Psoas muscle (tissue), 8 donors: ENCODE measurements at regions of chr10 and their contacts with region 1.

Region 1: DNA sequence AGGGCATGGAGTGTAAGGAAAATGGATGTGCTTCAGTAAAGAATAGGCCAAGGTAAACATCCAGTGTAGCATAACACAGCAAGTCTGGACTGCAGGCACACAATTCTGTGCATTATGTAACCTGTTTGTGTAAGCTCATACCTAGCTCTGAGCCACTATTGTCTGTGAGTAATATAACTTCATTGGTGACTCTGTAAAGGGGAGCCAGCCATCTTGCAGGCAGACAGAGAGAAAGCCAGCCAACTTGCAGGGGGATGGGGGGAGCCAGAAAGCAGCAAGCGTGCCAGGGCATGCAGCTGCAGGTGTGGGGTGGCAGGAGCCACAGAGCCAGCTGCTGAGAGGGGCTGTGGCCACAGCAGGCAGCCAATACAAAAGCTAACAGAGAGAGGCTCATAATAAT is 449.2 kb downstream of the IPMK start:
- DNase-seq: no peak
- ATAC-seq: no peak
- H3K4me3 ChIP-seq: no peak overlapping the region
- H3K27ac ChIP-seq: no peak overlapping the region
- H3K4me1 ChIP-seq: no peaks in the 10 kb centered on the region
- H3K27me3 ChIP-seq: no peaks in the 10 kb centered on the region
- CTCF ChIP-seq: no peak

Region 2: DNA sequence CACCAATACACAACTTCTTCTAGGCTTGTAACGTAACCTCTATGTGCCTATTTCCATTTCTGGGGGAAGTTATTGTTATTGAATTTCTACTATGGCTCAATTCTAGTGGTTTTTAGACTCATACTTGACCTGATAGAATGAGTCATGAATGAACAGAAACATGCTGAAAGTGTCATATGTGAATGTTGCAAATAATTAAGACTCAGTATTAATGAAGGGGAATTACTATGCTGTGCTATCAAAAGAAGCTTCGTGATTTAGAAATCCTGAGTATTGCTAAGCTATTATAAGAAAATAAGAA is 1322.4 kb before region 1 on chr10:
- intact Hi-C with region 1: loop called in 1 of 2 experiments (anchors 5 kb)
- DNase-seq: no peak
- ATAC-seq: no peak
- H3K4me3 ChIP-seq: no peak overlapping the region
- H3K27ac ChIP-seq: no peak overlapping the region
- H3K4me1 ChIP-seq: no peaks in the 10 kb centered on the region
- H3K27me3 ChIP-seq: no peaks in the 10 kb centered on the region
- CTCF ChIP-seq: no peak

Region 3: DNA sequence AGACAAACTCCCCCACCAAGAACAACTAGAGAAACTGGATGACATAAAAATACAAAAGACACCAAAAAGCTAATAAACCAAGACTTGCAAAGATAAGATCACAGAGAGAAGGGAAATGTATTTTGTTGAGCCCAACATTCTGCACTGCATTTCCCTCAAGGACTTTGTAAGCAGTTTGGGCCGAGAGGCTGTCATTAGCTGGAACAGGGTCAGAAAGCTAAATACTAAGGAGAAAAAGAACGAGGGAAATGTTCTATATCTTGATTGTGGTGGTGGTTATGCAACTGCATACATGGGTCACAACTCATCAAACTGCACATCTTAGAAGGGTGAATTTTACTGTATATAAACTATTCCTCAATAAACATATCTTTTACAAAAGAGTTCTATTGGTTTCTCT is 134.2 kb after region 1 on chr10:
- intact Hi-C with region 1: no loop called
- DNase-seq: no peak
- ATAC-seq: no peak
- H3K4me3 ChIP-seq: no peak overlapping the region
- H3K27ac ChIP-seq: no peak overlapping the region
- H3K4me1 ChIP-seq: no peaks in the 10 kb centered on the region
- H3K27me3 ChIP-seq: no peaks in the 10 kb centered on the region
- CTCF ChIP-seq: no peak

Region 4: DNA sequence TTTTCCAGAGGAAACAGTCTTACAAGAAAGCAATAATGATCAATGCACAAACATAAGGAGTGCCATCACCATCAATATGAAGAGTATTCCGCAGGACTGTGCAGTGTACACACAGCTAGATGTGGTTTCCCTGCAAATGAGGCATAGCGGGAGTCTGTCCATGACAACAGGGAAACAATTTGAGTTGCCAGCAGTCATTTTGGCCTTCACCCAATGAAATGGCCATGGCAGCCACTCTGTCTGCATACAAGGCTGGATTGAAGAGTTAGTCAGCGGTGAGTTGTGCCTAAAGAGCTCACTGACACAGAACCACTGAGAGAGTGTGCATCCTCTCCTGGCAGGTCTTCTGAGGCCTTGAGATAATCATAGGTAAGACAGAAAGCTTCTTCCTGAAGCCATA is 145.8 kb after region 1 on chr10:
- intact Hi-C with region 1: no loop called
- DNase-seq: peak in 1 of 2 donors; percentile 13
- ATAC-seq: peak in 2 of 4 donors; percentile 35 to 64
- H3K4me3 ChIP-seq: no peak overlapping the region
- H3K27ac ChIP-seq: no peak overlapping the region
- H3K4me1 ChIP-seq: no peaks in the 10 kb centered on the region
- H3K27me3 ChIP-seq: no peaks in the 10 kb centered on the region
- CTCF ChIP-seq: no peak